Activated CD8-positive, alpha-beta T cell treated with anti-CD3 and anti-CD28 coated beads, Interleukin-2, amount 10 ng/mL, durations not matched to agents 7 days and 5 days (primary cell): ENCODE measurements at regions of chr6 and their contacts with region 1.

Region 1: GRCh38 chr6:42661540-42662153 is 60.8 kb downstream of the PRPH2 start:
- DNase-seq: peak; percentile 90
- ATAC-seq: peak; percentile 84
- H3K4me3 Mint-ChIP-seq: no peak overlapping the region
- H3K27ac Mint-ChIP-seq: no peak overlapping the region
- H3K4me1 Mint-ChIP-seq: peaks cover 2% of the 10 kb centered on the region
- H3K27me3 Mint-ChIP-seq: no peaks in the 10 kb centered on the region

Region 2: GRCh38 chr6:42674780-42675179 is 13.1 kb after region 1 on chr6:
- CTCF ChIA-PET with region 1: interaction called, 31 read pairs
- POLR2A ChIA-PET with region 1: interaction called, 3 read pairs
- DNase-seq: no peak
- ATAC-seq: no peak
- H3K4me3 Mint-ChIP-seq: no peak overlapping the region
- H3K27ac Mint-ChIP-seq: no peak overlapping the region
- H3K4me1 Mint-ChIP-seq: no peaks in the 10 kb centered on the region
- H3K27me3 Mint-ChIP-seq: no peaks in the 10 kb centered on the region

Region 3: DNA sequence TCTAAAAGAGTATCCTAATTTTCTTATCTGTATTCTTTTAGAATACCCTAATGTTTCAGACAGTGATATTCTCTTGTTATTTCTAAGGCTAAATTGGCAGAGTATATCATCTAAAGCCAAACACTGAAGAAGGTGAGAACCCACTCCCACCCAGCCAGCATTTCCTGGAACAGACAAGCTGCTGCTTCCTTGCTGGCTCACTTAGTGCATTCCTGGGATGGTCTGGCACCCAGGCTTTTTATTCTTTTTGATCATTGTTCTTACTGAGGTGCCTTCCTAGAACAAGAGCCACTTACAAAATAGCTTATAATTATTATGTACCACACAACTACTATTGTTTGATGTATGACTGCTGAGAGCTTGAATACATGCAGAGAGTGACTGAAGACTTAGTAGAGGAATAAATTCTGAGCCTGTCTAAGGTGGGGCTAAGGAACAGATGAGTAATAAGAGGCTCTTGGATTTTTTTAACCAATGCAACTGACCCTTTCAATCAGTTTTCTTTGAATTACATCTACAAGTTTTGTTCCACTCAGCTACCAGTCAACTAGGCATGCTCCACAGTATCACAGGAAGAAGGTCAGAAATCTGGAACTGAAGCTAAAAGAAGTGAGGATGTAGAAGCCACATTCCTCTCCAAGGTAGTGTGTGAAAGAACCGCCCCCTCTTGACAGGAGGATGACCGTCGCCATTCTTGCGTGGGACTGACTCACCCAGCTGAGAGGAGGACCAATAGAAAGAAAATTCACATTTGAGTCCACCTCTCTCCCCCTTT is 30.7 kb after region 1 on chr6:
- CTCF ChIA-PET with region 1: interaction called, 20 read pairs
- POLR2A ChIA-PET with region 1: no interaction called
- DNase-seq: peak; percentile 25
- ATAC-seq: peak; percentile 35
- H3K4me3 Mint-ChIP-seq: no peak overlapping the region
- H3K27ac Mint-ChIP-seq: peak overlapping the region; percentile 88
- H3K4me1 Mint-ChIP-seq: peaks cover 43% of the 10 kb centered on the region
- H3K27me3 Mint-ChIP-seq: no peaks in the 10 kb centered on the region

Region 4: DNA sequence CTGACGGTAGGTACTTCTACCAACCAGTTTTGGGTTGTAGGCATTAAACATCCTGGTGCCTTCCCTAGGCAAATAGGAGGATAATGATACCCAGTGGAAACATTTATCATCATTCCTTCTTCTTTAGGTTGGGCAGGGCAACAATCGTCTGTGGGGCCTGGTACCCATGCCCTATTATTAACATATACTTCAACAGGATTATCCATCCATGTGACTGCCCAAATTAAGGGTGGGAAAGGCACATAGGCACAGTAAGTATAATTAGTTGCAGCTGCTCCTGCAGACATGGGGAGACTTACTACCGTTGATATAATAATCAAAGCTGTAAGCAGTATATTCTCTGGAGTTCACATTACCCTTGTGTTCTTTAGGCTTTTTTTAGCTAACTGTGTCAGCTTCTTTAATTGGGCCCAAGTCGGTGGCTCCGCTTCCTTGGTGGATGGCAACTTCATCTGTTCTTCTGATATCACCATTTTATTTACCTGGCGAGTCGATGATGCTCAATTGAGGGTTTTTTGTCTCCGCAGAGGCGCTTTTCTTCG is 234.6 kb after region 1 on chr6:
- CTCF ChIA-PET with region 1: interaction called, 12 read pairs
- POLR2A ChIA-PET with region 1: no interaction called
- DNase-seq: no peak
- ATAC-seq: no peak
- H3K4me3 Mint-ChIP-seq: no peak overlapping the region
- H3K27ac Mint-ChIP-seq: no peak overlapping the region
- H3K4me1 Mint-ChIP-seq: peaks cover 11% of the 10 kb centered on the region
- H3K27me3 Mint-ChIP-seq: no peaks in the 10 kb centered on the region